Natural killer cell (primary cell): ENCODE measurements at regions of chr14 and their contacts with region 1.

Region 1: DNA sequence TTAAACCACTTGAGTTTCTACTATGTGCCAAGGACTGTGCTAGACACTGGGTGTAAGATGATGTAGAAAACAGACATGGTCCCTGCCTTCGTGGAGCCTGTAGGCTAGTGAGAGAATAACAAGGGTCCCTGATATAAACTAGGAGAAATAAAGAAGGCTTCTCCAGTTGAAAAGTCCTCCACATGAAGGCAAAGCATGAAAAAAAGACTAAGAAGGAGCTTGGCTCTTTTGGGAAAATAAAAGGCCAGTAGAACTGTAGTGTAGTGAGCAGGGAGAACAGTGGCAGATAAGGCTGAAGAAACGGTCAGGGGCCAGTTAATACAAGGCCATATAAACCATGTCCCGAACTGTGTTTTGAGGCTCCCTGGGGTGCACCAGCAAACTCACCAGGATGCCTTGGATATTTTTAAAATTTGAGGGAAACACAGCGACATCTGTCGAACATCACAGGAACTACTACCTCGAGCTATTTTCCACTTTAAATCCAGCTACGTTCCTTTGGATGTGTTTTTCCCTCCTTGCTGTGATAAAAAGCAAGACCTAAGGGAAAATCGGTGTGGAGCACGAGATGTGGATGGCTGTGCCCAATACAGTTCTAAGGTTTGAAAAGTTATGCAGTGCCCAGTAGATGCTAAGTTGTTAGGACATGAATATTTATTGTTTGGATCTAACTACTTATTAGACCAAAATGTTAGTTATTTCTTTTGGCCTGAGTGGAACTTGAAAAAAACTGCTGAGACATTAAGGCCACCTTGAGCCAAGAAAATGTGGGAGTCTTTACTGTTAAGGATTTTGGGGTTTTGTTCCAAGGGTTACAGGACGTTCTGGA is 8.5 kb upstream of the CFL2 start:
- DNase-seq: peak in 1 of 2 donors; percentile 75
- ATAC-seq: peak; percentile 53 to 63 (median 62)
- H3K4me3 ChIP-seq: no peak overlapping the region
- H3K4me3 Mint-ChIP-seq: no peak overlapping the region
- H3K27ac ChIP-seq: no peak overlapping the region
- H3K27ac Mint-ChIP-seq: no peak overlapping the region
- H3K4me1 ChIP-seq: no peaks in the 10 kb centered on the region
- H3K4me1 Mint-ChIP-seq: peaks cover 0 to 6% of the 10 kb centered on the region in 2 donors
- H3K27me3 ChIP-seq: no peaks in the 10 kb centered on the region
- H3K27me3 Mint-ChIP-seq: peaks cover 0 to 7% of the 10 kb centered on the region in 2 donors
- CTCF ChIP-seq: peak; percentile 83

Region 2: GRCh38 chr14:34331728-34332623 is 391.0 kb before region 1 on chr14:
- intact Hi-C with region 1: loop called (anchors 5 kb)
- DNase-seq: peak; percentile 30 to 70
- ATAC-seq: peak; percentile 58 to 76 (median 69)
- H3K4me3 ChIP-seq: no peak overlapping the region
- H3K4me3 Mint-ChIP-seq: no peak overlapping the region
- H3K27ac ChIP-seq: no peak overlapping the region
- H3K27ac Mint-ChIP-seq: no peak overlapping the region
- H3K4me1 ChIP-seq: no peaks in the 10 kb centered on the region
- H3K4me1 Mint-ChIP-seq: peaks cover 8 to 16% of the 10 kb centered on the region in 2 donors
- H3K27me3 ChIP-seq: no peaks in the 10 kb centered on the region
- H3K27me3 Mint-ChIP-seq: no peaks in the 10 kb centered on the region
- CTCF ChIP-seq: peak; percentile 78

Region 3: DNA sequence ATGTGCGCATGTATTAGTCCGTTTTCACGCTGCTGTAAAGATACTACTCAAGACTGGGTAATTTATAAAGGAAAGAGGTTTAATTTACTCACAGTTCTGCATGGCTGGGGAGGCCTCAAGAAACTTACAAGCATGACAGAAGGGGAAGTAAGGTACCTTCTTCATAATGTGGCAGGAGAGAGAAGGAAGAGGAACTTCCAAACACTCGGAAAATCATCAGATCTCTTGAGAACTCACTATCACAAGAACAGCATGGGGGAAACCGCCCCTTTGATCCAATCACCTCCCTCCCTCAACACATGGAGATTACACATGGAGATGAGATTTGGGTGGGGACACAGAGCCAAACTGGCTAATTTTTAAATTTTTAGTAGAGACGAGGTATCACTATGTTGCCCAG is 51.2 kb before region 1 on chr14:
- intact Hi-C with region 1: loop called (anchors 1 kb)
- DNase-seq: no peak
- ATAC-seq: no peak
- H3K4me3 ChIP-seq: no peak overlapping the region
- H3K4me3 Mint-ChIP-seq: no peak overlapping the region
- H3K27ac ChIP-seq: no peak overlapping the region
- H3K27ac Mint-ChIP-seq: no peak overlapping the region
- H3K4me1 ChIP-seq: no peaks in the 10 kb centered on the region
- H3K4me1 Mint-ChIP-seq: no peaks in the 10 kb centered on the region
- H3K27me3 ChIP-seq: no peaks in the 10 kb centered on the region
- H3K27me3 Mint-ChIP-seq: no peaks in the 10 kb centered on the region
- CTCF ChIP-seq: no peak

Region 4: GRCh38 chr14:34826661-34827060 is 103.7 kb after region 1 on chr14:
- intact Hi-C with region 1: no loop called
- DNase-seq: no peak
- ATAC-seq: no peak
- H3K4me3 ChIP-seq: no peak overlapping the region
- H3K4me3 Mint-ChIP-seq: no peak overlapping the region
- H3K27ac ChIP-seq: no peak overlapping the region
- H3K27ac Mint-ChIP-seq: peak overlapping the region; percentile 41 to 65
- H3K4me1 ChIP-seq: no peaks in the 10 kb centered on the region
- H3K4me1 Mint-ChIP-seq: peaks cover 37 to 40% of the 10 kb centered on the region in 2 donors
- H3K27me3 ChIP-seq: no peaks in the 10 kb centered on the region
- H3K27me3 Mint-ChIP-seq: no peaks in the 10 kb centered on the region
- CTCF ChIP-seq: no peak

Region 5: DNA sequence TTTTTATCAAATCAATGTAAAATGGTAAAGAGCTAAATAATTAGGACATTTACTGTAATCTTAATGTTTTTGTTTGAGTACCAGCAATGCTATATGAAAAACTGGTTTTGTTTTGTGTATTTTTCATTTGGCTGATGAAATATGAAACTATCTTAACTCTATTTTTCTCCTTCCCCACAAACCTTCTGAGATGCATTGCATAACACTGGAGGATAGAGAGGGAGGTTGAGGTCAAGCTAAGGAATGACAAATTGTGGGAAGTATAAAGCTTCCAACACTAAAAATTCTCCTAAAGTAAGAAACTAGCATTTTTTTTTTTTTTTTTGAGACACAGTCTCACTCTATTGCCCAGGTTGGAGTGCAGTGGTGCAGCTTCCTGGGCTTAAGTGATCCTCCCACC is 228.3 kb after region 1 on chr14:
- intact Hi-C with region 1: no loop called
- DNase-seq: no peak
- ATAC-seq: no peak
- H3K4me3 ChIP-seq: no peak overlapping the region
- H3K4me3 Mint-ChIP-seq: no peak overlapping the region
- H3K27ac ChIP-seq: no peak overlapping the region
- H3K27ac Mint-ChIP-seq: no peak overlapping the region
- H3K4me1 ChIP-seq: no peaks in the 10 kb centered on the region
- H3K4me1 Mint-ChIP-seq: peaks cover 0 to 4% of the 10 kb centered on the region in 2 donors
- H3K27me3 ChIP-seq: no peaks in the 10 kb centered on the region
- H3K27me3 Mint-ChIP-seq: no peaks in the 10 kb centered on the region
- CTCF ChIP-seq: no peak

Region 6: DNA sequence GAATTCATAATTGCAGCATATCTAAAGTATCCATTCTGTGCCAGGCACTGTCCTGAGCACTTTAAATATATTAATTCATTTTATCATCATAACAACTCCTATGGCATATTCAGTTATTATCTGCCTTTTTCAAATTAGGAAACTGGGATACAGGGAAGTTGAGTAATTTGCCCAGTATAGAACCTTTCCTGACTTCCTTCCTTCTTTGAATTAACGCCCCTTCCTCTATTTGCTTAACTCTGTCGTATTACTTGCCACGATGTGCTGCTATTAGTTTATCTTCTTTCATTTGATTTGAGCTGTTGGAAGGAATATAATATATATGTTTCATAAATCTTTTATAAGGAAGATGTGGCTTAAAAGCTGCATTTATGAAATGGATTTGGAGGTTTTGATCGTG is 297.8 kb after region 1 on chr14:
- intact Hi-C with region 1: no loop called
- DNase-seq: no peak
- ATAC-seq: no peak
- H3K4me3 ChIP-seq: no peak overlapping the region
- H3K4me3 Mint-ChIP-seq: no peak overlapping the region
- H3K27ac ChIP-seq: no peak overlapping the region
- H3K27ac Mint-ChIP-seq: peak overlapping the region in 1 of 2 donors; percentile 60
- H3K4me1 ChIP-seq: no peaks in the 10 kb centered on the region
- H3K4me1 Mint-ChIP-seq: no peaks in the 10 kb centered on the region
- H3K27me3 ChIP-seq: no peaks in the 10 kb centered on the region
- H3K27me3 Mint-ChIP-seq: no peaks in the 10 kb centered on the region
- CTCF ChIP-seq: no peak